ENCODE measurements at regions of chr9 and their contacts with region 1.

Region 1: GRCh38 chr9:72509635-72510034 is 11.8 kb upstream of the TMC1 start:
- DNase-seq: no peak
- H3K4me3 Mint-ChIP-seq: no peak overlapping the region
- H3K27ac Mint-ChIP-seq: peak overlapping the region; percentile 79
- H3K4me1 Mint-ChIP-seq: peaks cover 16% of the 10 kb centered on the region
- H3K27me3 Mint-ChIP-seq: no peaks in the 10 kb centered on the region

Region 2: DNA sequence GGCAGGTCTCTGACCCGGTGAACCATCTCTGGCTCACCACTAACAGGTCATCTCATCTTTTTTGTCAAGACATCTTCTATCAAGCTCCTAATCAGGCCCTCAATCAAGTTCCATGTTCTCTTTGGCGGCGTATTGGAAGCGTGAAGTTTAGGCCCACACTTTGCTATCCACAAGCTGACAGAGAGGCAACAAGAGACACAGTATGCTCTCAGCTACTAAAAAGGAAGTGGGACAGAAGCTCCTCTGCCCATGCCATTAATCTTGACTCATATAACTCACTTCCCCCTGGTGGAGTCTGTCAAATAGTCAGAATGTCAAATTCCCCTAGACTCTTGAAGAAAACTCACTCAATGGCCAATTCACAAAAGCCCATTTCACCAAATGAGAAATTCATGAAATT is 65.8 kb before region 1 on chr9:
- CTCF ChIA-PET with region 1: no interaction called
- intact Hi-C with region 1: loop called (anchors 5 kb)
- DNase-seq: peak; percentile 12
- H3K4me3 Mint-ChIP-seq: no peak overlapping the region
- H3K27ac Mint-ChIP-seq: no peak overlapping the region
- H3K4me1 Mint-ChIP-seq: peaks cover 14% of the 10 kb centered on the region
- H3K27me3 Mint-ChIP-seq: no peaks in the 10 kb centered on the region

Region 3: GRCh38 chr9:72586388-72587130 is 76.9 kb after region 1 on chr9:
- CTCF ChIA-PET with region 1: no interaction called
- intact Hi-C with region 1: loop called (anchors 2 kb)
- DNase-seq: peak; percentile 50
- H3K4me3 Mint-ChIP-seq: no peak overlapping the region
- H3K27ac Mint-ChIP-seq: no peak overlapping the region
- H3K4me1 Mint-ChIP-seq: peaks cover 17% of the 10 kb centered on the region
- H3K27me3 Mint-ChIP-seq: no peaks in the 10 kb centered on the region